Activated CD8-positive, alpha-beta T cell treated with anti-CD3 and anti-CD28 coated beads for 36 hours (primary cell): ENCODE measurements at regions of chr10 and their contacts with region 1.

Region 1: GRCh38 chr10:125048101-125048864 is 106.4 kb downstream of the ZRANB1 start:
- DNase-seq: peak; percentile 82
- ATAC-seq: peak; percentile 91
- H3K4me3 Mint-ChIP-seq: no peak overlapping the region
- H3K27ac Mint-ChIP-seq: no peak overlapping the region
- H3K4me1 Mint-ChIP-seq: peaks cover 2% of the 10 kb centered on the region
- H3K27me3 Mint-ChIP-seq: peaks cover 7% of the 10 kb centered on the region
- CTCF ChIP-seq: peak; percentile 77

Region 2: DNA sequence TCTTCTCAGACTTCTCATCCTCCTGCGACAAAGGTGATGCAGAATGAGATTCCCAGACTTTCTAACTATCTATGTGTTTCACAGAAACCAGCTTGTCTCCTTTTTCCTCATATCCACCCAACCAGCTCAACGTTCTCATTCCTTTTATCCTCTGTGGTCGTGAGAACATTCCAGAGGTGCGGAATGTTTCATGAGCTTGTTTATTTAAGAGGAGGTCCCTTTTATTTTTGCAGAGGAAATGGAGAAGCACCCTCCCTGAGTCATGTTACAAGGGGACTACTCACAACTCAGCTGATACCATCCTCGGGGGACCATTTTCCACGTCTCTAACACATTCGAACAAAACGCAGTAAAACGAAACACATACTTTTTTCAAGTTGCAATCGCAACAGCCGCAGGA is 13.1 kb before region 1 on chr10:
- CTCF ChIA-PET with region 1: interaction called, 11 read pairs
- POLR2A ChIA-PET with region 1: no interaction called
- intact Hi-C with region 1: no loop called
- DNase-seq: no peak
- ATAC-seq: no peak
- H3K4me3 Mint-ChIP-seq: no peak overlapping the region
- H3K27ac Mint-ChIP-seq: no peak overlapping the region
- H3K4me1 Mint-ChIP-seq: no peaks in the 10 kb centered on the region
- H3K27me3 Mint-ChIP-seq: no peaks in the 10 kb centered on the region
- CTCF ChIP-seq: no peak

Region 3: DNA sequence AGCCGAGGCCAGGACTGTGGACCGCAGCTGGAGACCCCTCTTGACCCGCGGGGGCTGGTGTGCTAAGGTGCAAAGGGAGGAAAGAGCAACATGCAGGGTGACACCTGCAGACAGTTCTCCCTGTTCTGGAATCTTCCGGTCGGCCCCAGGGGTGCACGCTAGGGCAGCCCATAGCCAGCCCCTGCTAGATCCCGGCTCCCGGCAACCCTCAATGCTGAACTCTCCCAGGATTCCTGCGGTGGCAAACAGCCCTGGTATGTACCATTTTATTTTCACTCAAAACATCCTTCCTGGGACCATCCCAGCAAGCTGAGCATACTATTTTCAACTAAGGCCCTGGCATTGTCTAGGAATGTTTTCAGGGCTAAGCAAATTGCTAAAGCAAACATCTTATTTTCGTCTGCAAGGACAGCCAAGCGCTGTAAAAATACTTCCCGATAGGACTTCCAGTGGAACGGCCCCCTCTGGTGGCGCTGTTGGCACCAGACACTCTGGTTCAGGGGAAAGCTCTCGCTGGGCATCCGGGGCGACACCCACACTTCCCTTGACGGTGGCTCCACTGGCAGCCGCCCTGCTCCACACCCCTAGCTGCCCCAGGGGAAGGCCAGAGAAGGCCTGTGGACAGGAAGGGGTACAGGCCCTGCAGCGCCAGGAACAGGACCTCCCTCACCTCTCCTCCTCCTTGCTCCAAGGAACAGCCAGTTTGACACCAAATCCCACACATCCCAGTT is 12.7 kb after region 1 on chr10:
- CTCF ChIA-PET with region 1: interaction called, 32 read pairs
- POLR2A ChIA-PET with region 1: no interaction called
- intact Hi-C with region 1: no loop called
- DNase-seq: peak; percentile 66
- ATAC-seq: no peak
- H3K4me3 Mint-ChIP-seq: no peak overlapping the region
- H3K27ac Mint-ChIP-seq: no peak overlapping the region
- H3K4me1 Mint-ChIP-seq: peaks cover 15% of the 10 kb centered on the region
- H3K27me3 Mint-ChIP-seq: peaks cover 36% of the 10 kb centered on the region
- CTCF ChIP-seq: peak; percentile 67

Region 4: DNA sequence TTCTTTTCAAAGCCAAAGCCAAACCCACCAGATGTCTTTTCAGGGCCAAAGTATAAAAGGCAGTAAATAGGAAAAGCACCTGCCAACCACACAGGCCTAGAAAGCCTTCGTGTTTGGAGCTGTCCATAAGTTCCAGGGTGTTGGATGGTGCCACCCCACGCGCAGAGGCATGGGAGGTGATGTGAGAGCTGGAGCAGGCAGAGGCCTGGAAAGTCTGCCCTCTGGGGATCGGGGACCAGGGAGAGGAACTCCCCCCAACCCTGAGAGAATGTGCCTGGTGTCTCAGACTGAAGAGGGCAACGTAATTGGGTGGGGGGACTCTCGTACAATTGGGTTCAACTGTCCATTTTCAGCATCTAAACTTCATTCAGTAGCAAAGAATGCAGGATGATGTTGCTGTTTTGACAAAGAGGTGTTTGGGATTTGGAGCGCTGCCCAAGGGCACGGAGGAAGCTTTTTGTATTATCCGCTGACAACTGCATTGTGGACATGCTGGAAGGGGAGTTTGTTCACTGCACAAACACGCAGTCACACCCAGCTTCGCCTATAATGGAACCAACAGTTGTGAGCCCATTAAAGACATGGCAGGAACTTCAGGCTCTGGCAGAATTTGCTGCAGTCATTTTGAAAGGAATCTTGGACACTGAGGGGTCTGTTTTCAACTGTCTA is 129.8 kb after region 1 on chr10:
- CTCF ChIA-PET with region 1: no interaction called
- POLR2A ChIA-PET with region 1: no interaction called
- intact Hi-C with region 1: no loop called
- DNase-seq: no peak
- ATAC-seq: no peak
- H3K4me3 Mint-ChIP-seq: no peak overlapping the region
- H3K27ac Mint-ChIP-seq: no peak overlapping the region
- H3K4me1 Mint-ChIP-seq: no peaks in the 10 kb centered on the region
- H3K27me3 Mint-ChIP-seq: peaks cover 12% of the 10 kb centered on the region
- CTCF ChIP-seq: no peak